GM12878 (cell line): ENCODE measurements at regions of chr5 and their contacts with region 1.

Region 1: DNA sequence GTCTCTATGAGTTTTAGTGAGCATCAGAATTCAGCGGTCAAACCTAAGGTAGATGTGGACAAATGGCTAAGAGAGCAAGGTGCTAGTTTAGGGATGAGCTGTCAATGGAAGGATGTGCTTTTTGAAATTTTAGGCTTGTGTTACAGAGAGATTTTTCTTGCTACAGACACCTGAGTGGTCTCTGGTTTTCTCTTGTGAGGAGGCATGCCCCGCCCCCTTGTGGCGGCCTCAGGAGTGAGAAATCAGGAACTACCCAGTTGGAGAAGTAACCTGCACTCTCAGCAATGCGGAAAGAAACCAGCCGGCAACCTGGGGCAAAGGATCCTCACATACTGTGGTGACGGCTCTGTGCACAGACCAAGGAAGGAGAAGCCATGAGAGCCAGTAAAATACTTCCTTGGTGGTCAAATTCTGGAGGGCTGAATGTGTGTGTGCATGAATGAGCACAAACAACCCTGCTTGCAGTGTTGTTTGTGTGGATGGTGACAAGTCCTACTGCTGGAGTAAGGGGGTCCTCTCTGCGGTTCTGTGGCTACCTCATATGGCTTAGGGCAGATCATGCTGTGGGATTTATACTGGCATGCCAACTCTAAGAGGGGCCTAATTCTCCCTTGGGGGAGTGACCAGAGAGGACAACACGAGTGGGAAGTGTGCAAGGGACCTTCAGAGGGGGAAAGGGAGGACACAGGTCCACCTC is 16.7 kb upstream of the HSD17B4 start:
- DNase-seq: peak; percentile 44
- ATAC-seq: peak; percentile 95
- H3K4me3 ChIP-seq: no peak overlapping the region
- H3K27ac ChIP-seq: no peak overlapping the region
- H3K4me1 ChIP-seq: peaks cover 5% of the 10 kb centered on the region; the same call in 1 of the 2 replicates
- H3K27me3 ChIP-seq: no peaks in the 10 kb centered on the region
- CTCF ChIP-seq: peak; percentile 64 to 69 (median 64)
- EP300 ChIP-seq: no peak
- POLR2A ChIP-seq: no peak
- RAD21 ChIP-seq: peak; percentile 75

Region 2: DNA sequence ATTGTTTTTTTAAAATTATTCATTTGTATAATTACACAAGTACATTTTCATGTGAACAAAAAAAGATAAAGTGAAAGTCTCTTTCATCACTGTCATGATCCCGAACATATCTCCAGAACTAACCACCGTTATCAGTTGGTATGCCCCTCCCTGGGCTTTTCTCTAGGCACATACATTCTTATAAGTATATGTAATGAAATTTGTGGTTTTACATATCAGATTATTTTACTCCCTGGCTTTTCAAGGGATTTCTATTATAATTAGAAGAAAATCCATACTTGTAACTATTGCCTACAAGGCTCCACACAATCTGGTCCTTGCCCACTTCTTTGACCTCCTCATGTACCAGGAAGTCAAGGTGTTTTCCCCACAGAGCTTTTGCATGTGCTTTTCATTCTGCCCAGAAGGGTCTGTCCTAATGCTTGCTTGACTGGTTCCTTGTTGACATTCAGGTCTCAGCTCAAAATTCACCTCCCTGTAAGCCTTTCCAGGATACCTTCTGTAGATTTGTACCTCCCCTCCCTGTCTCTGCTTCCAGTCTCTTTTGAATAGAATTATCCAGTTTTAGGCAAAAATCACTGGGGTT is 17.0 kb before region 1 on chr5:
- CTCF ChIA-PET with region 1: interaction called, 30 read pairs
- POLR2A ChIA-PET with region 1: no interaction called
- RAD21 ChIA-PET with region 1: interaction called, 13 read pairs
- SMC1A ChIA-PET with region 1: interaction called, 36 read pairs
- in situ Hi-C with region 1: no loop called
- intact Hi-C with region 1: no loop called
- DNase-seq: no peak
- ATAC-seq: peak; percentile 73
- H3K4me3 ChIP-seq: no peak overlapping the region
- H3K27ac ChIP-seq: no peak overlapping the region
- H3K4me1 ChIP-seq: peaks cover 8% of the 10 kb centered on the region; the same call in 1 of the 2 replicates
- H3K27me3 ChIP-seq: no peaks in the 10 kb centered on the region
- CTCF ChIP-seq: no peak
- EP300 ChIP-seq: no peak
- POLR2A ChIP-seq: no peak
- RAD21 ChIP-seq: no peak

Region 3: GRCh38 chr5:119452373-119453039 is 16.9 kb after region 1 on chr5 and contains the start of gene HSD17B4:
- CTCF ChIA-PET with region 1: interaction called, 5 read pairs
- POLR2A ChIA-PET with region 1: no interaction called
- RAD21 ChIA-PET with region 1: no interaction called
- SMC1A ChIA-PET with region 1: interaction called, 11 read pairs
- in situ Hi-C with region 1: no loop called
- intact Hi-C with region 1: no loop called
- DNase-seq: peak; percentile 58
- ATAC-seq: peak; percentile 96
- H3K4me3 ChIP-seq: peak within 1 kb of the TSS; percentile 98
- H3K27ac ChIP-seq: peak within 1 kb of the TSS; percentile 45
- H3K4me1 ChIP-seq: no peaks in the 10 kb centered on the region
- H3K27me3 ChIP-seq: no peaks in the 10 kb centered on the region
- CTCF ChIP-seq: no peak
- EP300 ChIP-seq: no peak
- POLR2A ChIP-seq: peak; percentile 86
- RAD21 ChIP-seq: no peak
- polyA plus RNA-seq, gene HSD17B4: 38.6 to 62.4 TPM